Aorta (tissue), 5 donors: ENCODE measurements at regions of chr11 and their contacts with region 1.

Region 1: GRCh38 chr11:67317205-67317887 is 14.0 kb downstream of the SSH3 start:
- DNase-seq: peak; percentile 97 to 99
- ATAC-seq: peak; percentile 97
- H3K4me3 ChIP-seq: peak overlapping the region; percentile 45 to 67
- H3K27ac ChIP-seq: peak overlapping the region in 1 of 2 donors; percentile 64
- H3K4me1 ChIP-seq: no peaks in the 10 kb centered on the region
- H3K27me3 ChIP-seq: no peaks in the 10 kb centered on the region

Region 2: DNA sequence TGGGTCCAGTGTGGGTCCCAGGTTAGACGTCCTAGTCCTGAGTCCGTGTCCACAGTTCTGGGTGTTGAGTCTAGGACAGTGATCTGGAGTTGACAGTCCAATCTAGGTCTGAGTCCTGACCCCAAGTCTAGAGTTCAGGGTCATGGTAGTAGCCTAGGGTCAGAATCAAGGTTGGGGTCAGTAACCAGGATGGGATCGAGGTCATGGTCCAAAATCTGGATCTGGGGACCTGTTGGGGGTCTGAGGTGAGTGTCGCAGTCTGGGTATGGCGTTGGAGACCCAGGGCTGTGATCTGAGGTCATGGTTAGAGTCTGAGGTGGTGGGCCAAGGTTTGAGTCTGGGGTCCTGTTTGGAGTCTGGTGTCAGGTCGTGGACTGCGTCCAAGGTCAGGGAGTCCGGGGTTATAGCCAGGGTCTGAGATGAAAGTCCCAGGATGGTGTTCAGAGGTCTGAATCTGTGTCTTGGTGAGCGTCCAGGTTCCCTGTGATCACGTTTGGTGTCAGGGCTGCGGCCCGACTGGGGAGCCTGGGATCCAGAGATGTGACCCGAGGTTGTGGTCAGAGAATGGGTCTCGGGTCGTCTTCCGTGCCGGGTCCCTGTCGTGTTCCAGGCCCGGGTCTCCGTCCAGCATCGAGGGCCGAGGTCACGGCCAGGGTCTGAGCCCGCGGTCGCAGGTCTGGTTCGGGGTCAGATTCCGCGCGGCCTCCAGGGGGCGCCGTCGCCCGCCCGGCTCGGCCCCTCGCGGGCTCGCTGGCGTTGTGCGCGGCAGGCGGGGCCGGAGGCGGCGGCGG is 51.5 kb before region 1 on chr11:
- intact Hi-C with region 1: loop called (anchors 1 to 2 kb)
- DNase-seq: peak; percentile 84 to 94
- ATAC-seq: peak; percentile 76
- H3K4me3 ChIP-seq: peak overlapping the region in 1 of 2 donors; percentile 81
- H3K27ac ChIP-seq: peak overlapping the region in 1 of 2 donors; percentile 58
- H3K4me1 ChIP-seq: no peaks in the 10 kb centered on the region
- H3K27me3 ChIP-seq: no peaks in the 10 kb centered on the region

Region 3: DNA sequence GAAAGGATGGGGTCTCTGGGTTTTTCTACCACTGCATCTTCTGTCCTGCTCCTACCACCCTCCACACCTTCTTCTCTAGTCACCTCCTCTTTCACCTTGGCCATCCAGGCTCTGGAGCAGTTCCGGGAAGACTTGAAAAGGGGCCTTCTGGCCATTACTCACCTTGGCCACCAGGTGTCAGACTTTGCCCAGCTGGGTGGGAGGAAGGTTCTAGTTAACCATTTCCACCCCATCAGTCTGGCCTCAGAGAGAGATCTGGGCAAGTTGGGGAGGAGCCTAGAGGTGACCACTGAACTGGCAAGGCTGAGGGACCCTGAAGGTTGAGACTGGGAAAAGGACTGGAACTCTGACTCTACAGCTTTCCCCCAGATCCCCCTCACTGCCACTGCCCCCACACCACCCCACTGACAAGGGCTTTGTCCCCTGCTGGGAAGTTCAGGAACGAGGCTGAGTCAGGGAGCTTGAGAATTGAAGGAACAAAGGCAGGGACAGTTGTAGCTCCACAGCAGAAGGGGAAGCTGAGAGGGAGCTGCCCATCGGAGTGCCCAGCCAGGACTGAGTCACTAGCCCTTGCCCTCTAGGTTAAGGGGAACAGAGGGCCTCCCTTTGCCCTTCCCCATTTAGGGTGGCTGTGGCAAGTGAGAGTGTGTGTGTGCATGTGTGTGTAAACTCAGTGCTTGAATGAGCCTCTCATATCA is 39.7 kb after region 1 on chr11:
- intact Hi-C with region 1: no loop called
- DNase-seq: peak in 1 of 2 donors; percentile 88
- ATAC-seq: peak; percentile 26
- H3K4me3 ChIP-seq: no peak overlapping the region
- H3K27ac ChIP-seq: peak overlapping the region in 1 of 2 donors; percentile 92
- H3K4me1 ChIP-seq: peaks cover 5 to 6% of the 10 kb centered on the region in 2 donors
- H3K27me3 ChIP-seq: no peaks in the 10 kb centered on the region

Region 4: GRCh38 chr11:67534070-67534679 is 216.8 kb after region 1 on chr11:
- intact Hi-C with region 1: no loop called
- DNase-seq: no peak
- ATAC-seq: no peak
- H3K4me3 ChIP-seq: no peak overlapping the region
- H3K27ac ChIP-seq: no peak overlapping the region
- H3K4me1 ChIP-seq: no peaks in the 10 kb centered on the region
- H3K27me3 ChIP-seq: no peaks in the 10 kb centered on the region